B cell (primary cell): ENCODE measurements at regions of chr17 and their contacts with region 1.

Region 1: GRCh38 chr17:79749156-79749815 is 18.5 kb downstream of the ENPP7 start:
- DNase-seq: no peak
- ATAC-seq: no peak
- H3K4me3 ChIP-seq: no peak overlapping the region
- H3K4me3 Mint-ChIP-seq: no peak overlapping the region
- H3K27ac ChIP-seq: no peak overlapping the region
- H3K27ac Mint-ChIP-seq: no peak overlapping the region
- H3K4me1 ChIP-seq: peaks cover 25 to 28% of the 10 kb centered on the region in 2 donors
- H3K4me1 Mint-ChIP-seq: peaks cover 23% of the 10 kb centered on the region
- H3K27me3 ChIP-seq: peaks cover 0 to 67% (median 33%) of the 10 kb centered on the region in 4 experiments
- H3K27me3 Mint-ChIP-seq: peaks cover 51% of the 10 kb centered on the region
- CTCF ChIP-seq: no peak

Region 2: DNA sequence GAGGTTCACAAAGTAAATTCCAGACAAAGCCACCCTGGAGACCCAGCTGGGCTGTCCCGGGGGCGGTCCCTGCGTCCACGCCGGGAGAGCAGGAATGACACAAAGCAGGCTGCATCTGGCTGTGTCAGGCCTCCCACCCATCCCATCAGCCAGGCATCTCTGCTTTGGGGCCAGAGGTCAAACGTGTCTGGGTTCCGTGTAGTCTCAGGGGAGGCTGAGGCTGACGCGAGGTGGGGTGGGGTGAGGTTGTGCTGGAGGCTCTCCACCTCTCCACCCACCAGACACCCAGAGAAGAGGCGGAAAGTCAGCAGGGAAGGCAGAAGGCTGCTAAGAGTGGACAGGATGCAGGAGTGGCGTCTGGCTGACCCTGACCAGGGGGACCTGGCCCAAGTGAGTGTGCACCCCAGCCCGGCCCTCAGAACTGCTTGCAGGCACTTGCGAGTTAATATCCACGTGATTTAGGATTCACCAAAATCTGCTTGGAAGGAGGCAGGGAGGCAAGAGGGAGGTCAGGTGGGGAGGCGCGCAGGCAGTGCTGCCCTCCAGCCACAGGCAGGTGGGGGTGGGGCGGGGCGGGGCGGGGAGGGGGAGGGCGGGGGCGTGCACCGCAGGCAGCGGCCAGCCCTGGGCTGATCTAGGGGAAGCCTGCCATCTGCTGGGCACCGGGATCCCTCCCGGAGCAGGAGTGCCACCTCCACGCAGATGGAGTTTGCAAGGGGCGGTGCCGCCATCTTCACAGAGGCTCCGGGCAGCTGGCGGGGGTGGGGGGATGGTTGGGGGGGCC is 242.0 kb after region 1 on chr17:
- CTCF ChIA-PET with region 1: interaction called, 8 read pairs
- POLR2A ChIA-PET with region 1: no interaction called
- intact Hi-C with region 1: loop called (anchors 5 kb)
- DNase-seq: peak; percentile 83
- ATAC-seq: peak; percentile 98
- H3K4me3 ChIP-seq: peak overlapping the region in 4 of 5 experiments; percentile 46 to 58 (median 57)
- H3K4me3 Mint-ChIP-seq: peak overlapping the region; percentile 72
- H3K27ac ChIP-seq: no peak overlapping the region
- H3K27ac Mint-ChIP-seq: no peak overlapping the region
- H3K4me1 ChIP-seq: peaks cover 24 to 31% of the 10 kb centered on the region in 2 donors
- H3K4me1 Mint-ChIP-seq: peaks cover 27% of the 10 kb centered on the region
- H3K27me3 ChIP-seq: peaks cover 0 to 18% (median 0%) of the 10 kb centered on the region in 4 experiments
- H3K27me3 Mint-ChIP-seq: peaks cover 5% of the 10 kb centered on the region
- CTCF ChIP-seq: peak; percentile 66